Right ventricle myocardium inferior (tissue), 1 donor: ENCODE measurements at regions of chr6 and their contacts with region 1.

Region 1: GRCh38 chr6:148874698-148875293 is 128.0 kb downstream of the UST start:
- DNase-seq: no peak
- ATAC-seq: peak; percentile 89

Region 2: GRCh38 chr6:148760568-148761526 is 113.9 kb before region 1 on chr6:
- intact Hi-C with region 1: loop called (anchors 10 kb)
- DNase-seq: peak; percentile 88
- ATAC-seq: peak; percentile 93

Region 3: DNA sequence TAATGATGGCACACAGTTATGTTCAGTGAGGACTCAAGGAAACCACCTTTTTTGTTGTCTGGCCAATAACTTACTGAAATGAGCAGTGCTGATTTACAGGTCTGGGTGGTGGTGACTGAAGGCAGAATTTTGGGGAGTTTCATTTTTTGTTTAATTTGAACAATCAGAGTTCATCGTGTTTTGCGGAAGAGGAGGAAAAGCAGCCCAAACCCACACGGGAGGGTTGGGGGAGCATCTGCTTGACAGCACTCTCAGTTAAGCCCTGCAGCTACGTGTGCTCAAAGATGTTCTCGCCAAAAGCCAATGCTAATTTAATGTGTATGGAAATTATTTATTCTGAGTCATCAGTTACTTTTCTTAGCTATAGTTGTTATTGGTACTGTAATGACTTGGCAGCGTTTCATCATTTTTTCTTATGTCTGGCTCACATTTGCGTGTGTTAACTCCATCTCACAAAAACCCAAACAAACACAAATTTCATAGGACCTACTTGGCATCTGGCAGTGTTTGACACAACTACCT is 38.8 kb before region 1 on chr6:
- intact Hi-C with region 1: no loop called
- DNase-seq: peak; percentile 32
- ATAC-seq: no peak

Region 4: DNA sequence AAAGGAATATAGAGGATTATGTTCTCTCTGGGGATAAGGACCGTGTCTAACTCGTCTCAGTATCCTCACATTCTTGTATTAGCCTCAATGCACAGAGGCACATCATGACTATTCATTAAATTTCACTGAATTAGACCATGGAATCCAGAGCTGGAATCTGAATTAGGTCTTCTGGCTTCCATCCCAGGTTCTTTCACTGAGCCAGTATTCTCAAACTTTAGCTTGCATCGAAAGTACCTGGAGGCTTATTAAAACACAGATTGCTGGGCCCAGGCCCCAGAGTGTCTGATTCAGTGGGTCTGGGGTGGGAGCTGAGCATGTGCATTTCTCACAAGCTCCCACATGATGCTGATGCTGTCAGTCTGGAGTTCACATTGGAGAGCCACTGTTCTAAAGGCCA is 14.1 kb after region 1 on chr6:
- intact Hi-C with region 1: no loop called
- DNase-seq: no peak
- ATAC-seq: no peak

Region 5: DNA sequence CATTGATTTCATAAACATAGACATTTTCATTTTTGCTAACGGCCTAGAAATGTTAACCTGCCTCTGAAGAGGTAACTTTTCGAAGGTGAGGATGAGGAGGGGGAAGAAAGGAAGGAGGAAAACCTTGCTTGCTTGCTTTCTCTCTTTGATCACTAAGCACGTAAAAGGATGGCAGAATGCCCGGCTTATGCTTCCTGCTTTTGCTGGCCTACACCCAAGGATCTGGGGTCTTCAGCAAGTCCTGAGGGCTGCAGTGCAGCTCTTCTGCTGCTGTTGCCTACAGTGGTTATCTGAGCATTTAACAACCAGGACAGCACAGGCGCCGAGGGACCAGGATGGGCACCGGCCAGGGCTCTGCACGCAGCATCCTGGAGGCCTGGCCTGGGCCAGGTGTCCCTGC is 292.0 kb after region 1 on chr6:
- intact Hi-C with region 1: no loop called
- DNase-seq: no peak
- ATAC-seq: no peak